A673 (cell line): ENCODE measurements at regions of chr3 and their contacts with region 1.

Region 1: GRCh38 chr3:84547971-84548970 is 410.5 kb upstream of the CADM2 start:
- DNase-seq: peak; percentile 42
- H3K4me3 ChIP-seq: no peak overlapping the region
- H3K27ac ChIP-seq: no peak overlapping the region
- H3K4me1 ChIP-seq: no peaks in the 10 kb centered on the region
- H3K27me3 ChIP-seq: no peaks in the 10 kb centered on the region
- CTCF ChIP-seq: peak; percentile 65

Region 2: GRCh38 chr3:85208650-85209049 is 660.4 kb after region 1 on chr3:
- CTCF ChIA-PET with region 1: no interaction called
- POLR2A ChIA-PET with region 1: no interaction called
- intact Hi-C with region 1: no loop called
- DNase-seq: no peak
- H3K4me3 ChIP-seq: no peak overlapping the region
- H3K27ac ChIP-seq: no peak overlapping the region
- H3K4me1 ChIP-seq: no peaks in the 10 kb centered on the region
- H3K27me3 ChIP-seq: no peaks in the 10 kb centered on the region
- CTCF ChIP-seq: no peak

Region 3: GRCh38 chr3:85342915-85343314 is 794.6 kb after region 1 on chr3:
- CTCF ChIA-PET with region 1: no interaction called
- POLR2A ChIA-PET with region 1: no interaction called
- intact Hi-C with region 1: loop called (anchors 5 kb)
- DNase-seq: peak; percentile 68
- H3K4me3 ChIP-seq: no peak overlapping the region
- H3K27ac ChIP-seq: no peak overlapping the region
- H3K4me1 ChIP-seq: no peaks in the 10 kb centered on the region
- H3K27me3 ChIP-seq: no peaks in the 10 kb centered on the region
- CTCF ChIP-seq: peak; percentile 63

Region 4: GRCh38 chr3:85360742-85361387 is 812.6 kb after region 1 on chr3:
- CTCF ChIA-PET with region 1: interaction called, 5 read pairs
- POLR2A ChIA-PET with region 1: no interaction called
- intact Hi-C with region 1: loop called (anchors 5 kb)
- DNase-seq: peak; percentile 70
- H3K4me3 ChIP-seq: no peak overlapping the region
- H3K27ac ChIP-seq: no peak overlapping the region
- H3K4me1 ChIP-seq: no peaks in the 10 kb centered on the region
- H3K27me3 ChIP-seq: no peaks in the 10 kb centered on the region
- CTCF ChIP-seq: peak; percentile 66

Region 5: GRCh38 chr3:85576091-85576690 is 1027.9 kb after region 1 on chr3:
- CTCF ChIA-PET with region 1: no interaction called
- POLR2A ChIA-PET with region 1: no interaction called
- intact Hi-C with region 1: loop called (anchors 5 kb)
- DNase-seq: peak; percentile 79
- H3K4me3 ChIP-seq: no peak overlapping the region
- H3K27ac ChIP-seq: peak overlapping the region; percentile 73
- H3K4me1 ChIP-seq: peaks cover 25% of the 10 kb centered on the region
- H3K27me3 ChIP-seq: no peaks in the 10 kb centered on the region
- CTCF ChIP-seq: peak; percentile 86